PC-3 (cell line): ENCODE measurements at regions of chr4 and their contacts with region 1.

Region 1: DNA sequence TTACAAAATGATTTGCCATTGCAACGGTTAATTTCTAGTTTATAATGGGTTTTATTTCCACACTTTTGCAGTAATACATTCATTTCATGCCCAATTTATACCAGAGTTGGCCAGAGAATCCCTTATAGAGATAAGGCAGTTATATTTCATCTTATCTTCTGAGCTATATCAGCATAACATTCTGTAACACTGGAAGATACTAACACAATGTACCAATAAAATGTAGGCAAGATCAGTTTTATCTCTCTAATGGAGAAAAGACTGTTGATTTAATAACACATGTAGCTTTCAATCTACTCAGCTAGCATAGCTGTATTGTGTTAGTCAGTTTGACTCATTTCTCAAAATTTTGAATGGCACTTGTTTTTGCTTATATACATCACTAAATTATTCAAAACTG is 738.6 kb downstream of the TRAM1L1 start:
- DNase-seq: no peak
- ATAC-seq: no peak
- H3K4me3 ChIP-seq: no peak overlapping the region
- H3K27ac ChIP-seq: no peak overlapping the region
- H3K4me1 ChIP-seq: no peaks in the 10 kb centered on the region
- H3K27me3 ChIP-seq: no peaks in the 10 kb centered on the region
- CTCF ChIP-seq: no peak

Region 2: GRCh38 chr4:116180157-116180601 is 166.6 kb before region 1 on chr4:
- CTCF ChIA-PET with region 1: no interaction called
- POLR2A ChIA-PET with region 1: no interaction called
- intact Hi-C with region 1: loop called (anchors 5 kb)
- DNase-seq: peak; percentile 24
- ATAC-seq: peak; percentile 55
- H3K4me3 ChIP-seq: peak overlapping the region; percentile 46
- H3K27ac ChIP-seq: no peak overlapping the region
- H3K4me1 ChIP-seq: no peaks in the 10 kb centered on the region
- H3K27me3 ChIP-seq: no peaks in the 10 kb centered on the region
- CTCF ChIP-seq: peak; percentile 68